Mammary epithelial cell (primary cell): ENCODE measurements at regions of chr2 and their contacts with region 1.

Region 1: DNA sequence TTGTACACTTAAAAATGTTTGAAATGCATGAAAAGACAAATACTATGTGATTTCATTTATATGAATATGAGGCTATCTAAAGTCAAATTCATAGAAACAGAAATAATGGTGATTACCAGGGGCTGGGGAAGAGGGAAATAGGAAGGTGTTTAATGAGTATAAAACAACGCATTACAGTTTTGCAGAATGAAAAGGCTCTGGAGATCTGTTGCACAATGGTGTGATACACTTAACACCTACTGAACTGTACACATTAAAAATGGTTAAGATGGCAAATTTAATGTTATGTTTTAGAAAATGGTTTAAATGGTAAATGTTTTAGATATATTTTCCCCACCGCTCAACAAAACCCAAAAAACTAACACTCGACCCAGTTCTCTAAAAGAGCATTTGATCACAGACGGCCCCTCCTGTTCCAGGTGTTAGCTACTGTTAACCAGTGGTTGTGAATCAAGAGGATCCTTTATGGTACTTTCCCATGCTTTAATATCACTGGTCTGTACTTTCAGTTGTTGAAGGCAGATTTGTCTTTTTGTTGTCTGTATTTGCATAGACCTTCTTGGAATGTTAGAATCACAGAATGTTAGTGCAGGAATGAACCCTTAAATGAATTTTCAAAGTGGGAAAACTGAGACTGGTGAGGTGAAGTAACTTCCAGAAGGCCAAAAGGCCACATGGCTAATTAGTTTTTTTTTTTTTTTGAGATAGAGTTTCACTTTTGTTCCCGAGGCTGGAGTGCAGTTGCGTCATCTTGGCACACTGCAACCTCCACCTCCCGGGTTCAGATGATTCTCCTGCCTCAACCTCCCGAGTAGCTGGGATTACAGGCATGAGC is 10.2 kb downstream of the RAB10 start:
- DNase-seq: peak; percentile 59
- H3K4me3 ChIP-seq: peak overlapping the region in 2 of 3 experiments; percentile 27 to 28
- H3K27ac ChIP-seq: peak overlapping the region; percentile 67
- H3K4me1 ChIP-seq: peaks cover 12% of the 10 kb centered on the region
- H3K27me3 ChIP-seq: no peaks in the 10 kb centered on the region
- CTCF ChIP-seq: no peak

Region 2: DNA sequence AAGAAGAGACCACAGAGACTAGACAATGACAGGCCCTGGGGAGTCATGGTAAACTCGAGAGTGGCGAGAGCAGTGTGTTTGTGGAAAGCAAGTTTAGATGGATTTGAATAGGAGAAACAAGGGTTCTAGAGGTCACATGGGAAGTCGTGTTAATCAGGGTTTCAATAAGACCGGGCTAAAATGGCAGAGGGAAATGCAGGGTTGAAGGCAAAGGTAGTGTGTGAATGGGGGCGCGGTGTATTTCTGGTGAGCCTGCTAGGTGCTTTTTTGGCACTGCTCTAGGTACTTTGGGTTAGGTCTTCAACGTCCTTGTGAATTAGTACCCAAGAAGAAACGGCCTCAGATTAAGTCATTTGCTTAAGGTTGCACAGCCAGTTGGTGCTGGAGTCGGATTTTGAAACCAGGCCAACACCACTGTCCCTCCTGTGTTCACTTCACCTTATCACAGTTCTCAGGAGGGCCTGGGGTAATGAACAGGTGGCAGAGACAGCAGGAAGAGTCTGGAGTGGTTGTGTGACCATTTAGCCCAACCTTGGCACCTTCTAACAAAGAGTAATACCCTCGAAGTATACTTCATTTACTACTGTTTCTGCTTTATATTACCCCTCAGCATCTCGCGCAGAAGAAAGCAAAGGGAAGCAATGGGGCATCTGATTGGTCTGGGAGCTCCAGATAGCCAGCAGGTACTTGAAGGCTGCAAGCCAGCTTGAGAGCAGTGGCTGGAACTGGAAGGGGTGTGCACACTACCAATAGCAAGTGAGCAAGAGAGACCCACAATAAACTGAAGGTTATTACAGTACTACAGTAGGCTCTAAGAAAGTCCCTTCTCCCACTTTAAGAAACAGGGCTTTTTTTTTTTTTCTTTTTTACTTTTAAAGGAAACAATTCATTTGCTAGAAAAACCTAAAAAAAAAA is 95.4 kb after region 1 on chr2:
- CTCF ChIA-PET with region 1: no interaction called
- dilution Hi-C with region 1: no loop called
- in situ Hi-C with region 1: no loop called
- intact Hi-C with region 1: loop called (anchors 5 kb)
- DNase-seq: no peak
- H3K4me3 ChIP-seq: no peak overlapping the region
- H3K27ac ChIP-seq: no peak overlapping the region
- H3K4me1 ChIP-seq: no peaks in the 10 kb centered on the region
- H3K27me3 ChIP-seq: no peaks in the 10 kb centered on the region
- CTCF ChIP-seq: no peak